Right ventricle myocardium inferior (tissue), 1 donor: ENCODE measurements at regions of chr2 and their contacts with region 1.

Region 1: DNA sequence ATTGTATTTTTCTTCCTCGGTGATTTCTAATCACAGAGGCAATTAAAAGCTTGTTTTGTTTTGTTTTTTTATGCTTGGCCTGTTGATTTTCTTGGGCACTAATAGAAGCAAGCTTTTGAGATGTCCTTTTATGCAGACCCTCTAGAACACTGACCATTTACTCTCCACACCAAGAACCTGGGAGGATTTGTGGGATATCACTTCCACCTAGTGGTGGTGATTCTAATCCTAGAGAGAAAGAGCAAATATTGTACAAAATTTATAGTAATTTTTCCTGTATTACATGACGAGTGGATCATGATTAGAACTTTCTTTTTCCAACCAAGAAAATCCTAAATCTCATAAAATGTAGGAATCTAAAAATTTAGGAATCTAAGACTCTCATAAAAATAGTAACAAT is 23.4 kb downstream of the NEMP2 start:
- DNase-seq: no peak
- ATAC-seq: no peak

Region 2: DNA sequence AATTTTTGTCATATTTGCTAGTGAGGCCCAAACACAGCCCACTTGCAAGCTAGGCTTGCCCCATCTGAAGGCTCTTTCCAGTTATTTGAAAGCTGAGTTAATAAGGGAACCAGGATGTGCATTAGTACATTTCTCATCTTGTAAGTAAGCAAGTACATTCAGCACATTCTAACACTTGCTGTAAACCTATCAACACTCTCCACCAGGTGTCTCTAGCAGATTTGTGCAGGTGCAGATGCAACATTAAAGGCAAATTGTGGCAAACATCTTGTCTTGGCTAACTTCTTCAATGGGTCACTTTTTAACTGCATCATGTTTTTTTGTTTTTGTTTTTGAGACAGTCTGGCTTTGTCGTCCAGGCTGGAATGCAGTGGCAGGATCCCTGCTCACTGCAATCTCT is 128.3 kb before region 1 on chr2:
- intact Hi-C with region 1: loop called (anchors 2 kb)
- DNase-seq: no peak
- ATAC-seq: no peak

Region 3: DNA sequence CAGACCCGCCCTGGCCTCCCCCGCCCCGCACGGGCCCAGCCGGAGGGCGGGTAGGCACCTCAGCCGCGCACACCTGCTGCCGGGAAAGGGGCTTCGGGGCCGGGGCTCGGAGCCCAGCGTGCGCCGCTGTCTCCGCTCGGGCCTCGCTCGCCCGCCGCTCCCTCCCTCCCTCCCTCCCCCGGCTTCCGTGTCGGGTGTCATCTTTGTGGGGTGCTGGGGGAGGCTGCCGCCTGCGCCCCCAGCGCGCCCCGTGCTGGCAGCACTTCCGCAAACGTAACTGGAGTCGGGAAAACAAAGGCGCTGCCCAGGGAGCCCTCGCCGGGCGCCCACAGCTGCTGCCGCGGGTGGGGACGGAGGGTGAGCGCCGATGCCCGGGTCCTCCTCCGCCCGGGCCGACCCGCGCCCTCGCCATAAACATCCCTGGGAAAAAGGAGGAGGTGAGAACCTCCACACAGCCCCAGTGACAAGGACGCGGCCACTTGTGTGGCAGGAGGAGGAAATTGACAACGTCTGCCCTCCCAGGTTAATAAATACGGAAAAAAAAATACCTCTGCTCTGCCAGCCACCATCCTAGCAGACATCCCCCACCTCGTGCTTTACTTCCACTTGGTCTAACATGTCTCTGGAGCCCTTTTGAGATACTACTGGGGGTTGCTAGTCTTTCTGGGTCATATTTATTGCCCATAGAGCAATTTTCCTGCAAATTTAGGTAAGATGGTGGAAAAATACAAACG is 102.4 kb before region 1 on chr2:
- intact Hi-C with region 1: loop called (anchors 5 kb)
- DNase-seq: peak; percentile 78
- ATAC-seq: peak; percentile 55

Region 4: GRCh38 chr2:190469782-190470181 is 41.3 kb before region 1 on chr2:
- intact Hi-C with region 1: no loop called
- DNase-seq: no peak
- ATAC-seq: peak; percentile 92